Activated naive CD4-positive, alpha-beta T cell treated with anti-CD3 and anti-CD28 coated beads for 36 hours (primary cell): ENCODE measurements at regions of chr1 and their contacts with region 1.

Region 1: GRCh38 chr1:89757532-89757931 is 63.3 kb upstream of the LRRC8D start:
- DNase-seq: peak; percentile 86
- H3K4me3 Mint-ChIP-seq: peak overlapping the region; percentile 67
- H3K27ac Mint-ChIP-seq: peak overlapping the region; percentile 70
- H3K4me1 Mint-ChIP-seq: peaks cover 72% of the 10 kb centered on the region
- H3K27me3 Mint-ChIP-seq: no peaks in the 10 kb centered on the region

Region 2: GRCh38 chr1:89739013-89739843 is 18.3 kb before region 1 on chr1:
- CTCF ChIA-PET with region 1: interaction called, 7 read pairs
- intact Hi-C with region 1: loop called (anchors 1 kb)
- DNase-seq: peak; percentile 65
- H3K4me3 Mint-ChIP-seq: no peak overlapping the region
- H3K27ac Mint-ChIP-seq: peak overlapping the region; percentile 55
- H3K4me1 Mint-ChIP-seq: peaks cover 20% of the 10 kb centered on the region
- H3K27me3 Mint-ChIP-seq: no peaks in the 10 kb centered on the region

Region 3: GRCh38 chr1:89804642-89805237 is 47.2 kb after region 1 on chr1:
- CTCF ChIA-PET with region 1: no interaction called
- intact Hi-C with region 1: no loop called
- DNase-seq: peak; percentile 96
- H3K4me3 Mint-ChIP-seq: no peak overlapping the region
- H3K27ac Mint-ChIP-seq: no peak overlapping the region
- H3K4me1 Mint-ChIP-seq: no peaks in the 10 kb centered on the region
- H3K27me3 Mint-ChIP-seq: peaks cover 2% of the 10 kb centered on the region

Region 4: DNA sequence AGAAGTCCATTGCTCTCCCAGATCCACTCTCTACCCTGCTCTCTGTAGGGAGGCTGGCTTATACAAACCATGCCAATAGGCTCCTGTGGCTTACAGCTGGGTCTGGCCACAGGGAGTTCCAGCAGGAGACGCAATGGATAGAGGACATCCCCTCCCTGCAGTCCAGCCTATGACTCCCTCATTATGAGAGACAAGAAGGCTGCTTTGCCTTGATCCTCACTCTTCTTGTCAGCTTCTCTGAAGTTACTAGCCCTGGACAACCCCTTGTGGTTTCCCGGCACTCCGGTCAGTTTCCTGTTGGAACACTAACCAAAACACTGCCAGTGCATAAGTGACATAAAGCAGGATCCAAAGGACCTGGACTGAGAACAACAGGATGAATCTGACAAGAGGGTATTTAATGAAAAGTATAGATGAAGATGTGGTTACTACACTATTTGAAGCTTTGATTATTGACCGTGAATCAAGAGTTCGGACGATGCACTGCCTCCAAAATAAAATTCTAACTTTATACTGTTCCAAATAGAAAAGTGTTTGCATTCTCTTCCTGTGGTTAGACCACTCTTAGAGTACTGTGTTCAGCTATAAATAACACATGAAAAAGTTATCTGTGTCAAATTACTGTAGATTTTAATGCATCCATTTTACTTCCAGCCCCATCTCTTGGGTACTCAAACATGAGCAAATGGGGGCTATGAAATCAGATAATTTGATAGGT is 204.7 kb after region 1 on chr1:
- CTCF ChIA-PET with region 1: no interaction called
- intact Hi-C with region 1: no loop called
- DNase-seq: no peak
- H3K4me3 Mint-ChIP-seq: no peak overlapping the region
- H3K27ac Mint-ChIP-seq: no peak overlapping the region
- H3K4me1 Mint-ChIP-seq: peaks cover 18% of the 10 kb centered on the region
- H3K27me3 Mint-ChIP-seq: no peaks in the 10 kb centered on the region